ENCODE measurements at regions of chr2 and their contacts with region 1.

Region 1: DNA sequence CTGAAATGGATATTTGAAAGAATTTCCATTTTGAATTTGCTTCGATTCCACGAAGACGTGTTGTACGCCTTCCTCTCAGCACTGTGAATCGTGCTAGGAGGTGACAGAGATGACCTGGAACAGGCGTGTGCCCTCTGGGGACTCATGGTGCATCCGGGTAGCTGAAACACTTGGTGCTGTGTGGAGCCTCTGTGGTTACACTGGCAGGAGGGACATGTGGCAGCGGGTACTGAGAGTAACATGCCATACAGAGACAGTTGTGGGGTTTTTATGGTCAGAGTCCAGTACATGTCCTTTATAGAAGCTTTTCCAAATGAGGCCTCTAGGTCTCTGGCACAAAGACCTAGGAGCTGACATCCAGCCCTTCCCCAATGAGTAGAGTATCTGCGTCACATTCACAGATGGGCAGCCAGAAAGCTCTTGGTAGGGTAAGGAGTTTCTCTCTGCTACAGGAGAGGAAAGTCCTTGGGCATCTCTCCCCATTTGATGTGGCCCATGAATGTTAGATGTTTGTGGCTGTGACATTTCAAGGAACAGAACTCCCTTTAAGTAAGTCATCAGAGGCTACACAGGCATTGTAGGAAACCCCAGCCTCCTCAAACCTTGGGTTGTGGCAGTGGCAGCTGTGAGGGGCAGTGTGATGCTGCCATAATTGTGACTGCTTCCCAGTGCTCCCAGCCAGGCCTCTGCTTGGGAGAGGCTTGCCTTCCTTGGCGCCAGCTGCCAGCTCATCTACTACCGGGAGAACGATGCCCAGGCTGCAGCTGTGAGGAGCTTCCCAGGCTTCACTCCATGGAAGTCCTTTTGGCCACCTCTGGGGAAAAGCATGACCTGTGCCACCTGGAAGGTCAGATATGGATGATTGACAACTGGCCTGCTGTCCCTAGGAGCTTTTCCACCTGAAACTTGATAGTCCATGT is 80.6 kb downstream of the ACOXL start:
- DNase-seq: no peak
- CTCF ChIP-seq: no peak

Region 2: GRCh38 chr2:110796787-110797186 is 16.2 kb before region 1 on chr2:
- CTCF ChIA-PET with region 1: interaction called, 14 read pairs
- POLR2A ChIA-PET with region 1: no interaction called
- DNase-seq: no peak
- CTCF ChIP-seq: no peak

Region 3: GRCh38 chr2:110837446-110838405 is 24.7 kb after region 1 on chr2:
- CTCF ChIA-PET with region 1: interaction called, 24 read pairs
- POLR2A ChIA-PET with region 1: no interaction called
- DNase-seq: no peak
- CTCF ChIP-seq: no peak

Region 4: GRCh38 chr2:110843959-110844510 is 31.0 kb after region 1 on chr2:
- CTCF ChIA-PET with region 1: interaction called, 29 read pairs
- POLR2A ChIA-PET with region 1: no interaction called
- DNase-seq: no peak
- CTCF ChIP-seq: no peak